ENCODE measurements at regions of chr2 and their contacts with region 1.

Region 1: DNA sequence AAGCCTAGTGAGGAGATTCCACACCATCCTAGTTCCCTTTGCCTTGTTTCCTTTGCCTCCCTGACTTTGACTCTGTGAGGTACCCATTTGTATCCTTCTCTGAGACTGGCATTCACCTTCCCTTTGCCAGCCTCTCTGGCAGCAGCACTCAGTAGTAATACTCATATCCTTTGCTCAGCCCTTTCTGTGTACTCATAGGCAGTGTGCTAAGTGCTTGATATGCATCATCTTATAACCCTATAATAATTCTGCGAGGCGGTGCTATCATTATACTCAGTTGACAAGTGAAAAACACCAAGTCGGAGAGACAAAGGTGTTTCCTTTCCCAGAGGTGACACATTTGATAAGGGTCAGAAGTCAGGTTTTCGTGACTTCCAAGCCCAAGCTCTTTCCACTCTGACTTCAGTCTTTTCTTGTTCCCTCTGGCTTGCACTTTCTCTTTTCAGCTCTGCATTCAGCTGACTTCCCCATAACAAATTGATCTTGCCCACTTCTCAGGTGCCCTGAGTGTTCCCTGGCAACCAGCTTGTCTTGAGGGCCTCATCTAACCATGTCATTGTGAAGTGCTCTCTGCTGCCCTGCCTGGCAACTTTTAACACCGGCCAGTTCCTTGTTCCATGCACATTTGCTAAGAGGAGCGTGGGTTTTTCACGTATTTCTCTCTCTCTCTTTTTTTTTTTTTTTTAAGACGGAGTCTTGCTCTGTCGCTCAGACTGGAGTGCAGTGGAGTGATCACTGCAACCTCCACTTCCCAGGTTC is 94.5 kb upstream of the UPP2 start:
- DNase-seq: no peak
- ATAC-seq: no peak
- H3K4me3 ChIP-seq: no peak overlapping the region
- H3K27ac ChIP-seq: no peak overlapping the region
- H3K4me1 ChIP-seq: peaks cover 0 to 8% (median 5%) of the 10 kb centered on the region in 12 donors
- H3K27me3 ChIP-seq: no peaks in the 10 kb centered on the region
- CTCF ChIP-seq: no peak
- POLR2A ChIP-seq: no peak

Region 2: GRCh38 chr2:157327621-157328500 is 679.3 kb before region 1 on chr2:
- intact Hi-C with region 1: loop called in 1 of 10 experiments (anchors 10 kb)
- DNase-seq: peak; percentile 72 to 87 (median 79)
- ATAC-seq: peak; percentile 79 to 96 (median 91)
- H3K4me3 ChIP-seq: no peak overlapping the region
- H3K27ac ChIP-seq: no peak overlapping the region
- H3K4me1 ChIP-seq: peaks cover 0 to 11% (median 0%) of the 10 kb centered on the region in 12 donors
- H3K27me3 ChIP-seq: no peaks in the 10 kb centered on the region
- CTCF ChIP-seq: peak; percentile 75 to 94 (median 89)
- POLR2A ChIP-seq: no peak

Region 3: DNA sequence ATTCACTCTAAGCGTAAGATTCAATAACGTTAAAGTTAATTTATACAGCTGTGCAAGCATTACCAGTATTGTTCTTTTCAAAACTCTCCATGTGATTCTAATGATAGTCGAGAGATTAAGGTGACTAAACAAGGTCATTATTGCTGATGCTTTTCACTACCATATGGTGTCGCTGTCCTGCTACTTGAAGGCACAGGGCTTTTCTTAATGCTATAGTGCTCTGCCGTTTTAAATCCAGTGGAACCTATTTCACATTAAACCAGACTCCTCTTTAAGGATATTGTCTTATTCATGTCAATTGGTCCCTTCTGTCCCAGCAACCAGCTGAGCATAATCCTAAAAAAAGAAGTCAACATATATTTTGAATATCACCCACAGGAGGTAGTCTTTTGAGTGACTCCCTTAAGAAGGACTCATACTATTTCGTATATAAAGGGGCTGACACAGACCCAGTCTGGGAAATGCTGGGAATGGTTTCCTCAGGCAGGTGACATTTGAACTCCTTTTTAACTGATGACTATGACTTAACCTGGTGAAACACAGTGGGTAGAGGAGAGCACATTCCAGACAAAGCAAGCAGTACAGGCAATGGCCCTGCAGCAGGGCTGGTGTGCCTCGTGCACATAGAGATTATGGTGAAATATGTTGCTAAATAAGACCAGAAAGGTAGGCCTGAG is 509.4 kb before region 1 on chr2:
- intact Hi-C with region 1: loop called (anchors 2 to 5 kb)
- DNase-seq: no peak
- ATAC-seq: peak in 3 of 4 donors; percentile 57 to 72 (median 71)
- H3K4me3 ChIP-seq: no peak overlapping the region
- H3K27ac ChIP-seq: no peak overlapping the region
- H3K4me1 ChIP-seq: no peaks in the 10 kb centered on the region
- H3K27me3 ChIP-seq: no peaks in the 10 kb centered on the region
- CTCF ChIP-seq: peak; percentile 43 to 65 (median 57)
- POLR2A ChIP-seq: no peak

Region 4: GRCh38 chr2:157876066-157876787 is 130.9 kb before region 1 on chr2 and contains the start of gene ACVR1:
- intact Hi-C with region 1: loop called in 3 of 10 experiments (anchors 10 kb)
- DNase-seq: peak; percentile 96 to 97 (median 97)
- ATAC-seq: peak; percentile 95 to 98 (median 96)
- H3K4me3 ChIP-seq: peak within 1 kb of the TSS; percentile 46 to 97 (median 86)
- H3K27ac ChIP-seq: peak within 1 kb of the TSS; percentile 92 to 100 (median 96)
- H3K4me1 ChIP-seq: peaks cover 0 to 44% (median 25%) of the 10 kb centered on the region in 12 donors
- H3K27me3 ChIP-seq: no peaks in the 10 kb centered on the region
- CTCF ChIP-seq: peak in 11 of 12 donors; percentile 22 to 66 (median 36)
- POLR2A ChIP-seq: peak in 1 of 2 donors; percentile 67
- total RNA-seq, gene ACVR1: 15.3 to 37.6 (median 23.9) TPM

Measured in heart left ventricle (tissue), 16 donors.